ENCODE measurements at regions of chr9 and their contacts with region 1.

Region 1: DNA sequence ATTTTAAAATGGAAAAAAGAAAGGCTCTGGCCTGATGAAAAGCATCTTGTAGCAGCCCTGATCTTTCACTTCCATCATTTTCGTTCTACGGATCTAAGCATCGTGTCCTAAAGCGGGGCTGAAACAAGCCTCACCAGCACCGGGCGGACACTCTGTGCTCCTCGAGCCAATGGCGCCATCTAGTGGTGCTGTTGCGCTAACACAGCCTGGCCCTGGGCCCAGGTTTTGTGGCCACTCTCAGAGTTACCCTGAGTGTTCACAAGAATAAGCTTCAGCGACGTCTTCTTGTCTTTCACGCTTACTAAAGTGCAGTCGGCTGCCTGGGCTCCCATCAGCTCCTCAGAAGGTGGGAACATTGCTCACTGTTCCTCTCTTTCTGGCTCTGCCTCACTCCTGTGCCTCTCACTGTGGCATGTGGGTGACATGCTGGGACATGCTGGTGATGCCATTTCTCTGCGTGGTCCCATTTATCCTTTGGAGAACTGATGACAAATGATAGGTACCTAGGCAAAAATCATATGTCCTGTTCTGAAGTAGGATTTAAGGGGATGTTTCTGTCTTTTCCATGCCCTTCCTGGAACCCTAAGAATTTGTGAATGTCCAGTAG is 32.7 kb downstream of the DMRT3 start:
- DNase-seq: peak; percentile 75
- CTCF ChIP-seq: peak; percentile 100

Region 2: DNA sequence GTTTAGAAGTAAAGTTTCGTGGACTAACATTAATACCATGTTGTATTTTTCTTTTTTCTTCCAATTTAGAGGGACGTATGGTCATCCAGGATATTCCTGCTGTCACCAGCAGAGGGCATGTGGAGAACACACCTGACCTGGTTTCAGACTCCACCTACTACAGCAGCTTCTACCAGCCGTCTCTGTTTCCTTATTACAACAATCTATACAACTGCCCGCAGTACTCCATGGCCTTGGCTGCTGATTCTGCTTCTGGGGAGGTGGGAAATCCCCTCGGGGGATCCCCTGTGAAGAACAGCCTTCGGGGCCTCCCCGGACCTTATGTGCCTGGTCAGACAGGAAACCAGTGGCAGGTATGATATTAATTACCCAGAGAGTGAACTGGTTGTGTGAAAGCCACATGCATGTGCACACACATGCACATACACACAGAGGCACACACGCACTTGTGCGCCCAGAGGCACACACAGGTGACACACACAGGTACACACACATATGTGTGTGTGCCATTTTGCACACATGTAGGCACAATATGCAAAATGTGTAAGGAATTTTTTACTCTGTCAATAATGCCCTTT is 115.3 kb before region 1 on chr9:
- CTCF ChIA-PET with region 1: interaction called, 106 read pairs
- POLR2A ChIA-PET with region 1: no interaction called
- DNase-seq: peak; percentile 88
- CTCF ChIP-seq: peak; percentile 86

Region 3: GRCh38 chr9:928362-929042 is 80.7 kb before region 1 on chr9:
- CTCF ChIA-PET with region 1: interaction called, 11 read pairs
- POLR2A ChIA-PET with region 1: no interaction called
- DNase-seq: peak; percentile 22
- CTCF ChIP-seq: peak; percentile 18

Region 4: GRCh38 chr9:994005-994404 is 15.2 kb before region 1 on chr9:
- CTCF ChIA-PET with region 1: interaction called, 38 read pairs
- POLR2A ChIA-PET with region 1: no interaction called
- DNase-seq: no peak
- CTCF ChIP-seq: no peak

Measured in GM10248 (cell line).